ENCODE measurements at regions of chr3 and their contacts with region 1.

Region 1: DNA sequence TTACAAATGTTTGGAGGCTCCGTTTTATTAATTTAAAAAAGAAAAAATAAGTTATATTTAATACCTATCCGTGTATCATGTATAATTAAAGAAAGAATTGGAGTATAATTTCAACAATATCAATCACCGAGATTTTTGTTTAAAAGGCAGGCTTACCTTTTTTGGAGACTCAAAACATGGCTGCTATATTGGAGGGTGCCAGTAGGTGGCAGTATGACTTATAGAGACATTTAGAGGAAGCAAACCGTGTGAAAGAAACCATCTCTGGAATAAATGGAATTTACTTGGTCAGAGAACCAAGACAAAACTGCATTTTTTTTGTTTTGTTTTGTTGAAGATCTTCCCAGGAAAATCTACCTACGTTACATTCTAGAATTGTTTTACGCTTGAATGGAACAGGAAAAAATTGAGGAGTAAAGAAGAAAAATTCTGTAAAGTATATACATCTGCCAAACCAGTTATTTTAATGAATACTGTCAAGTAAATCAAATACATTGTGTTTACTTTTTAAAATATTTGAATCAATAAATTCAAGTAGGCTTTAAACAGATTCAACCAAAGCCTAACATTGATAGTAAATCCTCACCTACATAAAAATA is 802.6 kb upstream of the ALCAM start:
- DNase-seq: peak; percentile 77
- ATAC-seq: no peak
- H3K4me3 Mint-ChIP-seq: no peak overlapping the region
- H3K27ac Mint-ChIP-seq: no peak overlapping the region
- H3K4me1 Mint-ChIP-seq: peaks cover 2% of the 10 kb centered on the region
- H3K27me3 Mint-ChIP-seq: no peaks in the 10 kb centered on the region

Region 2: DNA sequence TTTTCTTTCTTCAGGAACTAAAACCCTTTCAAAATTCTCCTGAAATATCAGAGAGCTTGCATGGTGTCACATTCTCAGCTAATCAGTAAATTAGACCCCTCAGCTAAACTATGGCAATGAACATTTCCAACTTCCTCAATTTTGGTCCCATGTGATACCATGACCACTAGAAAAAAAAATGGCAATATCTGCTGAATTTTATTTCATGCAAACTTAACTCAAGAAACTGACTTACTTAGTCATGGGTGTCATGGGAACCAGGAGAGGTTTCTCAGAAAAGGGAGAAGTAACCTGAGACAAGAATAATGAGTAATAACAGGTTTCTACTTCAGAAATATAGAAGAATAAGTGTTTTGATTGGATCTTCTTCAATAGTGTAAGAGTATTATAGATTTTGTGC is 17.9 kb after region 1 on chr3:
- CTCF ChIA-PET with region 1: no interaction called
- POLR2A ChIA-PET with region 1: no interaction called
- intact Hi-C with region 1: no loop called
- DNase-seq: no peak
- ATAC-seq: no peak
- H3K4me3 Mint-ChIP-seq: no peak overlapping the region
- H3K27ac Mint-ChIP-seq: no peak overlapping the region
- H3K4me1 Mint-ChIP-seq: no peaks in the 10 kb centered on the region
- H3K27me3 Mint-ChIP-seq: peaks cover 8% of the 10 kb centered on the region

Region 3: DNA sequence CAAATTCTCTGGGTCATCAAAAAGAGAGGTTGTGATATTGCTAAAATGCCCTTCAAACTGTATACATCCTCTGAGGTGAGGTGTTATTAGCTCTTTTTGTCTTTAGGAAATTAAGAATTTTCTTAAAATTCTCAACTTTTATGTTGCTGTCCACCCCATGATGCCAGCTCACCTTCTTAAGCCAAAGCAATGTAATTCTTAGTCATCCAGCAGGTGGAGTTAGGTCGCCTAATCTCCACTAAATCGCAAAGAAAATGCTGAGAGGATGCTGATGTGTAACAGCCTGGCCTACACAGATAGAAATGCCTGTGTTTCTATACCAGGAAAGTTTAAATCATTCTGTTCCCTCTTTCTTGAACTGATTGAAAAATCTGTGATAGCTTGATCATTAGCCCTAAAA is 32.4 kb after region 1 on chr3:
- CTCF ChIA-PET with region 1: no interaction called
- POLR2A ChIA-PET with region 1: no interaction called
- intact Hi-C with region 1: loop called in 1 of 2 experiments (anchors 5 kb)
- DNase-seq: no peak
- ATAC-seq: peak; percentile 42
- H3K4me3 Mint-ChIP-seq: no peak overlapping the region
- H3K27ac Mint-ChIP-seq: no peak overlapping the region
- H3K4me1 Mint-ChIP-seq: peaks cover 3% of the 10 kb centered on the region
- H3K27me3 Mint-ChIP-seq: no peaks in the 10 kb centered on the region

Measured in activated CD4-positive, alpha-beta T cell treated with anti-CD3 and anti-CD28 coated beads for 36 hours (primary cell).